ENCODE measurements at regions of chr6 and their contacts with region 1.

Region 1: GRCh38 chr6:14210663-14211561 is 93.3 kb downstream of the CD83 start:
- DNase-seq: peak; percentile 94
- ATAC-seq: peak; percentile 89
- H3K4me3 Mint-ChIP-seq: peak overlapping the region; percentile 75
- H3K27ac Mint-ChIP-seq: peak overlapping the region; percentile 86
- H3K4me1 Mint-ChIP-seq: peaks cover 35% of the 10 kb centered on the region
- H3K27me3 Mint-ChIP-seq: no peaks in the 10 kb centered on the region

Region 2: GRCh38 chr6:14423330-14423729 is 212.4 kb after region 1 on chr6:
- CTCF ChIA-PET with region 1: no interaction called
- POLR2A ChIA-PET with region 1: no interaction called
- intact Hi-C with region 1: loop called (anchors 1 to 2 kb)
- DNase-seq: no peak
- ATAC-seq: no peak
- H3K4me3 Mint-ChIP-seq: no peak overlapping the region
- H3K27ac Mint-ChIP-seq: peak overlapping the region; percentile 96
- H3K4me1 Mint-ChIP-seq: peaks cover 54% of the 10 kb centered on the region
- H3K27me3 Mint-ChIP-seq: no peaks in the 10 kb centered on the region

Region 3: GRCh38 chr6:14638906-14639761 is 428.2 kb after region 1 on chr6:
- CTCF ChIA-PET with region 1: interaction called, 4 read pairs
- POLR2A ChIA-PET with region 1: no interaction called
- intact Hi-C with region 1: loop called in 1 of 2 experiments (anchors 2 kb)
- DNase-seq: no peak
- ATAC-seq: no peak
- H3K4me3 Mint-ChIP-seq: no peak overlapping the region
- H3K27ac Mint-ChIP-seq: peak overlapping the region; percentile 56
- H3K4me1 Mint-ChIP-seq: peaks cover 65% of the 10 kb centered on the region
- H3K27me3 Mint-ChIP-seq: no peaks in the 10 kb centered on the region

Region 4: DNA sequence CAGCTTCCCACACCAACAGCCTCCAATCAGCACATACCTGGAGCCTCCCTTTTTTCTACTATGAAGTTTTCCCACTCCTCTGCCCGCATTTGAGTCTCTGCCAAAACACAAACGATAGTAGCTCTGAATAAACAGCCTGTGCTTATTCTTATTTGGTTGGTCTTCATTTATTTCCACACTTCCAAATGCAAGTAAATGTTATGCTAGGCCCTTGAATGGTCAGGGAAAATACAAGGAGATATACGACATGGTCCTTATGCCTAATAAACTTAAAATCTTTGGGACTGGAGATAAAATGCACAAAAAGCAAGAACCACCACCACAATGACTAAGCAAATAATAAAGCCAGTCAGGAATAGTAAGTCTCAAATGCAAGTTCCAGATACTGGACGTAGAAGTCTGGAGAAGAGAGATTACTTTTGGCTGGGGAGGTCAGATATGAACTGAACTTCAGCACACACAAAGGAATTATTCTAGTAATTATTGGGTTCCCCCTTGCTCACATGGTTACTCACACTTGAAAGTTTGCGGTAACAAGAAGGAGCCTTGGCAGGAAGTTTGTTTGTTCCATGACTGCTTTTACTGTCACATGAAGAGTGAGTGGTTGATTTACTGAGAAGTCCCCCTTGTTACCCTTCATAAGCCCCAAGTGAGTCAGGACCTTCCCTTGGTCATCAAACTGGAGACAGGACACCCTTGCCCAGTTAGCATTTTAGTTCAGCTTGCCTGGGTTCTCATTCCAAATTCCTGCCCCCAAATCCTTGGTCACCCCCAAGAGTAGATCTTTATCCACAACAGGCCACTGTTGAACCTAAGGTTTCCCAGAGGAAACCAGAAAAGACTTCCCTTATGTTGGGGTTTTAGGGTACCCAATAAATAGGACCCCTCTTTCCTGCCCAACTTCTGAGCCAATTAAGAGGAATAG is 523.8 kb after region 1 on chr6:
- CTCF ChIA-PET with region 1: no interaction called
- POLR2A ChIA-PET with region 1: no interaction called
- intact Hi-C with region 1: loop called (anchors 1 to 5 kb)
- DNase-seq: peak; percentile 55
- ATAC-seq: peak; percentile 37
- H3K4me3 Mint-ChIP-seq: peak overlapping the region; percentile 67
- H3K27ac Mint-ChIP-seq: peak overlapping the region; percentile 100
- H3K4me1 Mint-ChIP-seq: peaks cover 99% of the 10 kb centered on the region
- H3K27me3 Mint-ChIP-seq: no peaks in the 10 kb centered on the region

Region 5: DNA sequence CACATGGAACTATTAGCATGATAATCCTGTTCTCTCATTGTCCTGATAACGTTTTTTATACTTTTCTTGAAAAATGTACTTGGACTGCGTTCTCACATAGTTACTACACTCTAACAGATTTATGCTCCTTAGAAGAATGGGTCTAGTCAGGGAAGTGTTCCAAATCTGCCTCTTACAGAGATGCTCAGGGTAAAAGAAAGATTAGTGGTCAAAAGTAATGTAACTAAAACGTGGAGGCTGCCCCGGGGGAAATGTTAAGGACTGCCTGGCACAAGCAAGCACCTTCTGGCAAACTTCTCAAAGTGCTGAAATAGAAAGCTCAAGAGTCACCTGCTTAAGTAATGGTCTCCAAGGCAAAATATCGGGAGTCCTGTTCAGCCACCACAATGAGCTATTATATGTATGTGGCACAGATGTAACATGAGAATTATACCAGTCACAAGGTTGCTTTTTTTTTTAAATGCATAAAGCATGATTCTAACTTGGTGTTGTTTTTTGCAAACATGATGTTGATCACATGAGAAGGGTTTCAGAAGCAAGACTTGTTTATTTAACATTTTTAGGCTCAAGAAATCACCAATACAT is 790.5 kb after region 1 on chr6:
- CTCF ChIA-PET with region 1: no interaction called
- POLR2A ChIA-PET with region 1: no interaction called
- intact Hi-C with region 1: no loop called
- DNase-seq: no peak
- ATAC-seq: no peak
- H3K4me3 Mint-ChIP-seq: no peak overlapping the region
- H3K27ac Mint-ChIP-seq: no peak overlapping the region
- H3K4me1 Mint-ChIP-seq: no peaks in the 10 kb centered on the region
- H3K27me3 Mint-ChIP-seq: no peaks in the 10 kb centered on the region

Region 6: GRCh38 chr6:15132854-15133670 is 922.1 kb after region 1 on chr6:
- CTCF ChIA-PET with region 1: no interaction called
- POLR2A ChIA-PET with region 1: no interaction called
- intact Hi-C with region 1: loop called in 1 of 2 experiments (anchors 10 kb)
- DNase-seq: no peak
- ATAC-seq: peak; percentile 62
- H3K4me3 Mint-ChIP-seq: no peak overlapping the region
- H3K27ac Mint-ChIP-seq: no peak overlapping the region
- H3K4me1 Mint-ChIP-seq: peaks cover 36% of the 10 kb centered on the region
- H3K27me3 Mint-ChIP-seq: no peaks in the 10 kb centered on the region

Region 7: DNA sequence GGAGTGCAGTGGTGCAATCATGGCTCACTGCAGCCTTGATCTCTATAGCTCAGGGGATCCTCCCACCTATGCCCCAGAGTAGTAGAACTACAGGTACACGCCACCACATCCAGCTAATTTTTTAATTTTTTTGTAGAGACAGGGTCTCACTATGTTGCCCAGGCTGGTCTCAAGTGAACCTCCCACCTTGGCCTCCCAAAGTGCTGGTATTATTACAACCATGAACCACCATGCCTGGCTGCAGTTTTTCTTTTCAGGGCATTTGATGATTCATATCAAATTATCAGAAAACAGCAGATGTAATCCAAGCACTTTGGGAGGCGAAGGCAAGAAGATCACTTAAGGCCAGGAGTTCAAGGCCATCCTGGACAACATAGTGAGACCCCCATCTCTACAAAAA is 946.6 kb after region 1 on chr6:
- CTCF ChIA-PET with region 1: no interaction called
- POLR2A ChIA-PET with region 1: no interaction called
- intact Hi-C with region 1: no loop called
- DNase-seq: no peak
- ATAC-seq: no peak
- H3K4me3 Mint-ChIP-seq: no peak overlapping the region
- H3K27ac Mint-ChIP-seq: no peak overlapping the region
- H3K4me1 Mint-ChIP-seq: no peaks in the 10 kb centered on the region
- H3K27me3 Mint-ChIP-seq: peaks cover 3% of the 10 kb centered on the region

Region 8: DNA sequence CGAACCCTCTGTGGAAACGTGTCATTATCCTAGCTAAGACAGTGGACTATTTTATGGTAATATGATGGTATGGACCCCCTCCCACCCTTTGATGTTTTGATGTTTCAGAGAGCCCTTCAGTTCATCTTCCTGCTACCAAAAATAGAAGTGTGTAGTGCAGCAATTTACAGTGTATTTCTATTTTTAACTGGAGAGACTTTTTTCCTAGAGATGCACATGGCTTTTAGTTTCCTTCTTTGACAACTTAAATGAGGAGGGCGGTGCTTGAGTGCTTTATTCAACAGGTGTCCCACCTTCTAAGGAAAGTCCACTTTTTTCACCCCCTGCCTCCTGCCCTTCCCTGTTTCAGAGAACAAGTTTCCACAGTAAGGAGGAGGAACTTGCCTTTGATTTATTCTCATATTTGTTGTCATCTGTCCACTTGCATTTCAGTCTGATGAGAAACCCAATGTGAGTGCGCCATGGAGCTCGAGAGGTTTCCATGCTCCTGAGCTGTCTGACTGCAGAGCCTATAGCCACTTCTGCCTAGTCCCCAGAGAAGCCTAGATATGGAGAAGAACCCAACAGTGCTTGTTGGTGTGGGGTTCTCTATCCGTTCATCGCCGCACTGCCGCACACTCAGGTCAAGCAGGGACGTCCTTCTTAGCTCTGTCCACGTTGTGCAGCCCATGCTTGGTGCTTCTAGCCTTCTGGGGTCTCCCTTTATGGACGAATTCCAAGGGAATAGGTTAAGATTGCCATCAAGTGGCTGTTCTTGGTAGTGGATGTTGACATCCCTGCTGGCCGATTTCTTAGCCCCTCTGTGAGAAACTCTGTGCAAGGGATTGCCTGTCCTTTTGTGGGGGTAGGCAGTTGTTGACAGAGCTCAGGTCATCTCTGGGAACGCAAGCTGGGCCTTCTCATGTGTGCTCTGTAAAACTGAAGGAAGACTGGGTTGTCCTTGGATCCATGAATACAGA is 1179.1 kb after region 1 on chr6:
- CTCF ChIA-PET with region 1: interaction called, 4 read pairs
- POLR2A ChIA-PET with region 1: no interaction called
- intact Hi-C with region 1: loop called in 1 of 2 experiments (anchors 5 kb)
- DNase-seq: no peak
- ATAC-seq: no peak
- H3K4me3 Mint-ChIP-seq: no peak overlapping the region
- H3K27ac Mint-ChIP-seq: peak overlapping the region; percentile 63
- H3K4me1 Mint-ChIP-seq: peaks cover 81% of the 10 kb centered on the region
- H3K27me3 Mint-ChIP-seq: no peaks in the 10 kb centered on the region

Region 9: GRCh38 chr6:15621203-15622044 is 1410.5 kb after region 1 on chr6:
- CTCF ChIA-PET with region 1: interaction called, 3 read pairs
- POLR2A ChIA-PET with region 1: no interaction called
- intact Hi-C with region 1: loop called in 1 of 2 experiments (anchors 1 kb)
- DNase-seq: peak; percentile 45
- ATAC-seq: peak; percentile 93
- H3K4me3 Mint-ChIP-seq: no peak overlapping the region
- H3K27ac Mint-ChIP-seq: peak overlapping the region; percentile 6
- H3K4me1 Mint-ChIP-seq: peaks cover 32% of the 10 kb centered on the region
- H3K27me3 Mint-ChIP-seq: peaks cover 2% of the 10 kb centered on the region